Activated CD4-positive, alpha-beta T cell treated with anti-CD3 and anti-CD28 coated beads, Interleukin-2, amount 10 ng/mL, durations not matched to agents 7 days and 5 days (primary cell): ENCODE measurements at regions of chr6 and their contacts with region 1.

Region 1: DNA sequence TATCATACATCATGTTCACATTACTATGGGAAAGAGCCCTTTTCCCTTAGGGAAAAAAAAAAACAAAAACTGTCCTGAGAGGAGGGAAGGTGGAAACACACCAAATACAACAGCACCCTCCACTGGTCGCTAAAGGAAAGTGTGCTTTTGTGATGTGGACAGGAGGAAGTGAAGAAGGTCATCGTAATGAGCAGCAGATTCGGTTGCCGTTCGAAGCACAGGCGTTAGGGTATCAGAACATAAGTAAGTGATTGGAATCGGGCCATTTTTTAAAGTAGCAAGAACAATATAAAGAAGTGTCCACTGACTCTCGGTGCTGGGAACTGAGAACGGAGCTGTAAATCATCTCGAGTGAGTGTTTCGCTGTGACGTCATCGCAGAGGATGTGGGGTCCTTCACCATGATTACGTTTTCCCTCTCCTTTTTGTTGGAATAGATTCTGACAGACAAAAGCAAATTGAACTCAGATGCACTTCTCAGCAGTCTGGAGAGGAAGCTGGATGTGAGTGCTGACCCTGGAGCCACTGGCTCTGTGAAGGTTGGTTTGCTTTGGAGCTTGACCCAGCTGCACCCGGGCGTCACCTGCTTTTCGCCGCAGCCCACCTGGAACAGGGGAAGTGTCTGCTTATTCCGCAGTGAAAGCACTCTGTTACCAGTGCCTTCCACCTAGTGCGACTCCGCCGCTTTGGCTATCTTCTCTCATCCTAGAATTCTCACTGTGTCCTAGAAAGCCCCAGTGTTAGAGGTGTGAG is 203.6 kb upstream of the GMDS start:
- DNase-seq: peak; percentile 16
- H3K4me3 Mint-ChIP-seq: no peak overlapping the region
- H3K27ac Mint-ChIP-seq: no peak overlapping the region
- H3K4me1 Mint-ChIP-seq: peaks cover 6% of the 10 kb centered on the region
- H3K27me3 Mint-ChIP-seq: peaks cover 11% of the 10 kb centered on the region

Region 2: GRCh38 chr6:2384518-2384917 is 64.5 kb before region 1 on chr6:
- CTCF ChIA-PET with region 1: no interaction called
- POLR2A ChIA-PET with region 1: interaction called, 10 read pairs
- DNase-seq: no peak
- H3K4me3 Mint-ChIP-seq: no peak overlapping the region
- H3K27ac Mint-ChIP-seq: no peak overlapping the region
- H3K4me1 Mint-ChIP-seq: no peaks in the 10 kb centered on the region
- H3K27me3 Mint-ChIP-seq: no peaks in the 10 kb centered on the region

Region 3: DNA sequence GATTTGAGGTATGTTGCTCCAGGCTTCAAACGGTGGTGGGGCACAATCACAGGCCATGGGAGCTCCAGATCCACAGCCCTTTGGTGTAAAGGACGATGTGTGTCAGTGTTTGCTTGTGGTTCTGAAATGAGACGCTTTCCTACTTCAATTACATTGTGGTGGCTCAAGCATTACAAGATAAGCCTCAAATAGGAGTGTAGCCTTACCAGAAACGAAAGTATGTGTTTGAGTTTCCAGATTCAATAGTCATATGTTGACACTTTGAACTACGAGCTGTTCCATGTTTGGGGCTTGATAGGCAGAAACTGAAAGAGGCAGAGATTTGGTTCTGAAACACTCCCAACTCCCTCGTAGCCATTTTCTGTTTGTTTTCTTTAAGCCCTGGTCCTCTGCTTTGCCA is 114.6 kb after region 1 on chr6:
- CTCF ChIA-PET with region 1: no interaction called
- POLR2A ChIA-PET with region 1: no interaction called
- DNase-seq: no peak
- H3K4me3 Mint-ChIP-seq: no peak overlapping the region
- H3K27ac Mint-ChIP-seq: no peak overlapping the region
- H3K4me1 Mint-ChIP-seq: peaks cover 10% of the 10 kb centered on the region
- H3K27me3 Mint-ChIP-seq: peaks cover 61% of the 10 kb centered on the region